Pancreas (tissue), 10 donors: ENCODE measurements at regions of chr9 and their contacts with region 1.

Region 1: DNA sequence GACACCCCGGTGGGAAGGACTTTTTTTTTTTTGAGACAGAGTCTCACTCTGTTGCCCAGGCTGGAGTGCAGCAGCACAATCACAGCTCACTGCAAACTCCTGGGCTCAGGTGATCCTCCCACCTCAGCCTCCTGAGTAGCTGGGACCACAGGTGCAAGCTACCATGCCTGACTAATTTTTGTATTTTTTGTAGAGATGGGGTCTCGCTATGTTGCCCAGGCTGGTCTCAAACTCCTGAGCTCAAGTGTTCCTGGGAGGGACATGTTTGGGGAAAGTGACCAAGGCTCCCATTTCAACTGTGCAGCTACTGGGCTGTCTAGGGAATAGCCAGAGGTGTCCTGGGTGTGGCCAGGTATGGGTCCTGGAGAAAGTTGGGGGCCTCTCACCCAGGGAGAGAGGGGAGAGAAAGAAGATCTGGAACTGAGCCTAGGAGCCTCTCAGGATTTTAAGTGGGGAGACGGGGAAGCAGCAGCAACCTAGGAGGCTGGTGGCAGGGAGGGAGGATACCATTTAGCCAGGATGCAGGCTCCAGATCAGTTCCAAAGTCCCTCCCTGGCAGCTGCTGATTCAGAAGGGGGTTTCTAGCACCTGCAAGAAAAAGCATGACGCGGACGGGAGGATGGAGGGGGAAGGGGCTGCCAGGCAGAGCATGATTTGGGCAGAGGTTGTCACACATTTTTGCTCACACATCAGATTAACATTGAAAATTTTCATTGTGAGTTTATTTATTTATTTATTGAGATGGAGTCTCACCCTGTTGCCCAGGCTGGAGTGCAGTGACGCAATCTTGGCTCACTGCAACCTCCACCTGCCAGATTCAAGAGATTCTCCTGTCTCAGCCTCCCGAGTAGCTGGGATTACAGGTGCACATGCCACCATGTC is 6.7 kb upstream of the TOR1B start:
- DNase-seq: no peak
- ATAC-seq: no peak
- H3K4me3 ChIP-seq: no peak overlapping the region
- H3K27ac ChIP-seq: no peak overlapping the region
- H3K4me1 ChIP-seq: no peaks in the 10 kb centered on the region
- H3K27me3 ChIP-seq: no peaks in the 10 kb centered on the region
- CTCF ChIP-seq: no peak

Region 2: DNA sequence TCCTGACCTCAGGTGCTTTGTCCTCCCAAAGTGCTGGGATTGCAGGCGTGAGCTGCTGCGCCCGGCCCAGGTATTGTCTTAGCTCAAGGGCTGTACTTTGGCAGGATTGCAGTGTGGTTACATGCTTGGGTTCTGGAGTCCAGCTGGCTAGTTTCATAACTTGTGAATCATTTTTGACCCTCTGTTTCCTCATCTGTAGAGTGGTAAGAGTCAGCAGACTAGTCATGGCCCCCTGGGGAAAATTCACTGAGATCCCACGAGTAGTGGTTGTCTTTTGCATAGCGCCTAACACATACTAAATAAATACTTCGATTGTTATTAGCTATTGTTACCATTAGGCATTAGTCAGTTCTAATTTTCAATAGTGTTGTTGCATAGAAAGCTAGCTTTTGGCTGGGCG is 670.8 kb before region 1 on chr9:
- intact Hi-C with region 1: loop called in 1 of 3 experiments (anchors 10 kb)
- DNase-seq: no peak
- ATAC-seq: peak in 2 of 4 donors; percentile 29 to 44
- H3K4me3 ChIP-seq: no peak overlapping the region
- H3K27ac ChIP-seq: no peak overlapping the region
- H3K4me1 ChIP-seq: no peaks in the 10 kb centered on the region
- H3K27me3 ChIP-seq: no peaks in the 10 kb centered on the region
- CTCF ChIP-seq: no peak

Region 3: GRCh38 chr9:129641746-129642513 is 154.3 kb before region 1 on chr9 and contains the start of gene ASB6:
- intact Hi-C with region 1: loop called in 1 of 3 experiments (anchors 5 kb)
- DNase-seq: peak; percentile 94 to 100 (median 98)
- ATAC-seq: peak; percentile 87 to 96 (median 92)
- H3K4me3 ChIP-seq: peak within 1 kb of the TSS; percentile 89 to 100 (median 98)
- H3K27ac ChIP-seq: peak within 1 kb of the TSS; percentile 60 to 81 (median 77)
- H3K4me1 ChIP-seq: peaks cover 16 to 22% (median 17%) of the 10 kb centered on the region in 3 donors
- H3K27me3 ChIP-seq: no peaks in the 10 kb centered on the region
- CTCF ChIP-seq: peak; percentile 100
- total RNA-seq, gene ASB6: 6.3 to 13.1 (median 8.3) TPM

Region 4: GRCh38 chr9:129685220-129685932 is 110.9 kb before region 1 on chr9:
- intact Hi-C with region 1: no loop called
- DNase-seq: no peak
- ATAC-seq: no peak
- H3K4me3 ChIP-seq: no peak overlapping the region
- H3K27ac ChIP-seq: no peak overlapping the region
- H3K4me1 ChIP-seq: no peaks in the 10 kb centered on the region
- H3K27me3 ChIP-seq: no peaks in the 10 kb centered on the region
- CTCF ChIP-seq: no peak

Region 5: GRCh38 chr9:129863059-129863690 is 66.9 kb after region 1 on chr9:
- intact Hi-C with region 1: no loop called
- DNase-seq: no peak
- ATAC-seq: peak in 2 of 4 donors; percentile 15 to 42
- H3K4me3 ChIP-seq: no peak overlapping the region
- H3K27ac ChIP-seq: no peak overlapping the region
- H3K4me1 ChIP-seq: no peaks in the 10 kb centered on the region
- H3K27me3 ChIP-seq: no peaks in the 10 kb centered on the region
- CTCF ChIP-seq: no peak